WTC11 (cell line): ENCODE measurements at regions of chr20 and their contacts with region 1.

Region 1: GRCh38 chr20:645318-646106 is 7.5 kb downstream of the SRXN1 start:
- DNase-seq: peak; percentile 92
- ATAC-seq: peak; percentile 86
- H3K4me3 Mint-ChIP-seq: no peak overlapping the region
- H3K27ac Mint-ChIP-seq: peak overlapping the region; percentile 45
- H3K4me1 Mint-ChIP-seq: peaks cover 15% of the 10 kb centered on the region
- H3K27me3 Mint-ChIP-seq: no peaks in the 10 kb centered on the region; the same call in 1 of the 2 replicates
- CTCF ChIP-seq: peak; percentile 97

Region 2: DNA sequence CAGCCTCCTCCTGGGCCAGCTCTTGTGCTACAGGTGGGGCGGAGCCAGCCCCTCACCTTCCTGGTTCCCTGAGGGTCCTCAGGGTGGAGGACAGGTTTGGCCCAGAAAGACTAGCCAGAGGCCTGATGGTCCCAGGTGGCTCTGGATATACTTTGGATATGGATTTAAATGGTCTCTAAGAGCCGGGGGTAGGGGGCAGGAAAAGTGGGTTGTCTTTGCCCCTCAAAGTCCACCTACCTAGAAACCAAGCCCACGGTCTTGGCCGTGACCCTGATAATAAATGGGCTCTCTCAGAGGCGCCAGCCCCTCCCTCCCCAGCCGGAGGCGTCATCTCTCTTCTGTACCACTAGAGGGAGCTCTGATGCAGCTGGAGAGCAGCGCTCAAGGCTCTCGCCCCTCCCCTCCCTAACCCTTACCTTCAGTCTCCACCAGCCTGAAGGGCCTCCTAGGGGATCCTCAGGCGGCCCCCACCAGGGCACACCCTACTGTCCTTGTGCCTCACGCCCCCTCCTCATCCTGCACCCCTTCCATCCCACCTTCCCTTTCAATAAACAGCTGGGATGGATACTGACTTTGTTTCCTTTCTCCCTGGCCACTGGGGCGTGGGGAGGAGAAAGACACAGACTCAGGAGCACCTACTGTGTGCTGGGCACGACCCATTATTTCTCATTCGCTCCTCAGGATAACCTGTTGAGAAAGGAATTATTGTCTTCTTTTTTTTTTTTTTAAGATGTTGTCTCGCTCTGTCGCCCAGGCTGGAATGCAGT is 291.0 kb before region 1 on chr20:
- CTCF ChIA-PET with region 1: interaction called, 18 read pairs
- POLR2A ChIA-PET with region 1: no interaction called
- DNase-seq: peak; percentile 84
- ATAC-seq: peak; percentile 92
- H3K4me3 Mint-ChIP-seq: no peak overlapping the region
- H3K27ac Mint-ChIP-seq: no peak overlapping the region
- H3K4me1 Mint-ChIP-seq: peaks cover 6% of the 10 kb centered on the region; the same call in 1 of the 2 replicates
- H3K27me3 Mint-ChIP-seq: no peaks in the 10 kb centered on the region; the same call in 1 of the 2 replicates
- CTCF ChIP-seq: peak; percentile 95

Region 3: GRCh38 chr20:437787-438486 is 207.6 kb before region 1 on chr20:
- CTCF ChIA-PET with region 1: no interaction called
- POLR2A ChIA-PET with region 1: no interaction called
- DNase-seq: no peak
- ATAC-seq: no peak
- H3K4me3 Mint-ChIP-seq: no peak overlapping the region
- H3K27ac Mint-ChIP-seq: no peak overlapping the region
- H3K4me1 Mint-ChIP-seq: peaks cover 21% of the 10 kb centered on the region
- H3K27me3 Mint-ChIP-seq: peaks cover 43% of the 10 kb centered on the region
- CTCF ChIP-seq: no peak

Region 4: DNA sequence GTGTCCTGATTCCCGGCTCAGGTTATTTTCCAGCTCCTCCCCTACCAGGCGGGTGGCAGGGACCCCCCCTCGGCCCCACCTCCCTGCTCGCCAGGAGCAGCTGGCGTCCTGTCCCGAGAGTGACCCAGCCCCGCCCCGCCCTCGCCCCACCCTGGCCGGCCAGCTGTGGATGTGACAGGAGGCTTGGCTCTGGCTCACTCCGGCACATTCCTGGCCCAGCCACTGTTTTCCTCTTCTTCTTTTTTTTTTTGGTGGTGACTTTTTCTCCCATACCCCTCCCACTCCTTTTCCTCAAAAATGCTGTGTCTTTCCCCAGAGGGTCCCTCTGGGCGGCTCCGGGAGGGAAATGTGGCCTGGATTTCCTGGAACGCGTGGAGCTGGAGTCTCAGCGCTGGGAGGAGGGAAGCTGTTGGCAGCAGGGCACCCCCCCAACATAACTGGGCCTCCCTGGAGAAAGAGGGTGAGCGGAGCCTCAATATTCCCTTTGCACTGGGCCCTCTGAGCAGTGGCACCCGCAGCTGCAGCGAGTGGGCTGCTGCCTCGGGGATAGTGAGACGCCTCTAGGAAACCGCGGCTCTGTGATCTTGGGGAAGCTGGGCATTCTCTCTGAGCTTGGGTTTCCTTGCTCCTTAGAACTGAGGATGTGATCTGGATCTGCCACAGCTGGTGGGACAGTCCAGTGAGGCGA is 73.6 kb before region 1 on chr20:
- CTCF ChIA-PET with region 1: interaction called, 46 read pairs
- POLR2A ChIA-PET with region 1: interaction called, 3 read pairs
- DNase-seq: peak; percentile 60
- ATAC-seq: peak; percentile 53
- H3K4me3 Mint-ChIP-seq: peak overlapping the region; percentile 22
- H3K27ac Mint-ChIP-seq: no peak overlapping the region
- H3K4me1 Mint-ChIP-seq: peaks cover 56% of the 10 kb centered on the region
- H3K27me3 Mint-ChIP-seq: peaks cover 6% of the 10 kb centered on the region; the same call in 1 of the 2 replicates
- CTCF ChIP-seq: no peak

Region 5: DNA sequence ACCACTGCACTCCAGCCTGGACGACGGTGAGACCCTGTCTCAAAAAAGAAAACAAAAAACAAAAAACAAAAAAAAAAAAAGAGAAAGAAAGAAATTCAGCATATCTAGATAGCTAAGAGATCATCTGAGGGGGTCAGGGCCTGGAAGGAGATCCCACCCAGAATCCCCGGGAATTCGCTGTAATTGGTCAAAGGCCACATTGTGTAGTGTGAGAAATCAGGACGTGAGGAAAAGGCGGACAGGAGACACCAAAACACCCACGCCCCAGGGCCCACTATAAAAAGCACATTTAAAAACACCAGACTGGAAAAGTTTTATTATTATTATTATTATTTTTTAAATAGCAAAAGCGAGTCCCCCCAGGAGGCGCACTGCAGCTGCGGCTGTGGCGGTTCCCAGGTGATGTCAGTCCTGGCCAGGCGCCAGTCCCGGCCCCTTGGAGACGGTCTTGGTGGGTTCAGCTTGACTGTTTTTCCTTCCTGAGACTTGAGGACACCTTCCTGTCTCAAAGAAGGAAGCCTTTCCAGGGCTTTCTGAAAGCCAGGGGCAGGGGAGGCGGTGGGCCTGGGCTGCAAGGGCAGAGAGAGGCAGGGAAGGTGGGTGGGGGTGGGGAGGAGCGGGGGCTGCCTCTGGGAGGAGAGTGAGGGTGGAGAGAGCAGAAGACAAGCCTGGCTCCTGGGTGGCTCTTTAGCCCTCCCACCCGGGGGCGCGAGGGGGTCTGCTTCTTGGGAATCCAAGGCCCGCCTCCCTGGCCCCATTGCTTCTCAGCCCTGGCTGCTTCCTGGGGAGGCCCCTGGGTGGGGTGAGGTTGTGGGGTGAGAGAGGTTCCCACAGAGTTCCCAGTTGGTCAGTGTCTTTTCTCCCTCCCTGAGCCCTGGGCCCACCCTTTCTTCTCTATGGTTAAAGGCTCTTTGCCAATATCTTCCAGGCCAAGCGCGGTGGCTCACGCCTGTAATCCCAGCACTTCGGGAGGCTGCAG is 49.9 kb before region 1 on chr20:
- CTCF ChIA-PET with region 1: interaction called, 17 read pairs
- POLR2A ChIA-PET with region 1: no interaction called
- DNase-seq: no peak
- ATAC-seq: peak; percentile 67
- H3K4me3 Mint-ChIP-seq: no peak overlapping the region
- H3K27ac Mint-ChIP-seq: no peak overlapping the region
- H3K4me1 Mint-ChIP-seq: peaks cover 4% of the 10 kb centered on the region; the same call in 1 of the 2 replicates
- H3K27me3 Mint-ChIP-seq: peaks cover 5% of the 10 kb centered on the region; the same call in 1 of the 2 replicates
- CTCF ChIP-seq: no peak

Region 6: DNA sequence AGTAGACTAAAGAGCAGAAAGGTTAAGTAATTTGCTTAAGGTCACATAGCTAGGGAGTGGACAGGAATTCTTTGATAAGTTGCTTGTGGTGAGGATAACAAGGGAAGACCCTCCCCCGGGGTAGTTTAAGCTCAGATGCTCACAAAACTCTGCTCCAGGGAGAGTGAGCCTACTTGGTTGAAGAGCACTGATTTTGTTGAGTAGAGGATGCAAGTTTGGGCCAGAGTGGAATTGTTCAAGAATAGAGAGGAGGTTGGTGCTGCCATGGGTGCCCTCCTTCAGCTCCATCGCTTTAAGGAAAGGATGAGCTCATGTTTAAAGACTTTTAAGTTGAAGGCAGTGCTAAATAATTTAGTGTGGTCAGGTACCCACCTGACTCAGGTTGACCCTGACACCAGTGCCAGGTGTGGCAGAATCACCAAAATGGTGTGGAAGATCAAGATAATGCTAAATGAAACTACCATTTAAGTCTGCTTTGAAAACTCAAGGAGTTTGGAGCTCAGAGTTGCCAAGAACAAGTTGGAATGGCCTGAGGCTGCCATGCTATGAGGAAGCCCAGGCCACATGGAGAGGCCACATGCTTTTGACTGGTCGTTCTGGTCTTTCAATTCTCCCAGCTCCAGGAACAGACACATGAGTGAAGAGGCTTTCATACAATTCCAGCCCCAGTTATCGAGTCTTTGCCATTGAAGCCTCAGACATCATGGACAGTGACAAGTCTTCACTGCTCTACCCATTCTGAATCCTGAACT is 27.4 kb before region 1 on chr20:
- CTCF ChIA-PET with region 1: interaction called, 28 read pairs
- POLR2A ChIA-PET with region 1: no interaction called
- DNase-seq: no peak
- ATAC-seq: no peak
- H3K4me3 Mint-ChIP-seq: no peak overlapping the region
- H3K27ac Mint-ChIP-seq: no peak overlapping the region
- H3K4me1 Mint-ChIP-seq: peaks cover 13% of the 10 kb centered on the region
- H3K27me3 Mint-ChIP-seq: peaks cover 5% of the 10 kb centered on the region
- CTCF ChIP-seq: no peak

Region 7: GRCh38 chr20:667391-667964 is 22.0 kb after region 1 on chr20:
- CTCF ChIA-PET with region 1: interaction called, 136 read pairs
- POLR2A ChIA-PET with region 1: interaction called, 4 read pairs
- DNase-seq: peak; percentile 87
- ATAC-seq: peak; percentile 54
- H3K4me3 Mint-ChIP-seq: no peak overlapping the region
- H3K27ac Mint-ChIP-seq: no peak overlapping the region
- H3K4me1 Mint-ChIP-seq: peaks cover 49% of the 10 kb centered on the region
- H3K27me3 Mint-ChIP-seq: peaks cover 30% of the 10 kb centered on the region
- CTCF ChIP-seq: peak; percentile 84

Region 8: DNA sequence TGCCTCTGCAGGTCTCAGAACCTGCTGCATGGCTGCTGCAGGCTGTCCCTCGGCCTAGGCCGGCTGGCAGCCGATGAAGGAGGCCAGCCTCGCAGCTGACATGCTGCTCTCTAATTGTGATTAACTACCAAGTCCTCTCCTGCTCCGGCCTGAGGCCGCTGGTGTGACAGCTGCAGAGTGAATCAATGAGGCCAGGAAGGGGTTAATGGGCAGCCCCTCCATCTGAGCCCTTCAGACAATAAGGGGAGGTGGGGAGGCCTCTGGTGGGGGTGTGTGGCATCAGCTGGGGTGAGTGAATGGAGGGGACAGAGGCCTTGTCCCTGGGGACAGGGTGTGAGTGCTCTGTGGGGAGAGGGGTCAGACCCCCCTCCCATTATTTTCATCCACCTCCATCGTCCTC is 88.3 kb after region 1 on chr20:
- CTCF ChIA-PET with region 1: interaction called, 42 read pairs
- POLR2A ChIA-PET with region 1: no interaction called
- DNase-seq: no peak
- ATAC-seq: no peak
- H3K4me3 Mint-ChIP-seq: no peak overlapping the region
- H3K27ac Mint-ChIP-seq: no peak overlapping the region
- H3K4me1 Mint-ChIP-seq: peaks cover 9% of the 10 kb centered on the region
- H3K27me3 Mint-ChIP-seq: peaks cover 12% of the 10 kb centered on the region
- CTCF ChIP-seq: no peak

Region 9: GRCh38 chr20:787825-788224 is 142.3 kb after region 1 on chr20:
- CTCF ChIA-PET with region 1: no interaction called
- POLR2A ChIA-PET with region 1: no interaction called
- DNase-seq: no peak
- ATAC-seq: no peak
- H3K4me3 Mint-ChIP-seq: no peak overlapping the region
- H3K27ac Mint-ChIP-seq: no peak overlapping the region
- H3K4me1 Mint-ChIP-seq: peaks cover 26% of the 10 kb centered on the region
- H3K27me3 Mint-ChIP-seq: peaks cover 20% of the 10 kb centered on the region
- CTCF ChIP-seq: no peak